CD4-positive, alpha-beta memory T cell (primary cell): ENCODE measurements at regions of chr14 and their contacts with region 1.

Region 1: GRCh38 chr14:99271951-99272631 is at the start of gene BCL11B:
- DNase-seq: peak; percentile 87 to 96 (median 91)
- H3K4me3 ChIP-seq: peak within 1 kb of the TSS; percentile 91 to 93
- H3K4me3 Mint-ChIP-seq: peak within 1 kb of the TSS; percentile 92 to 100 (median 98)
- H3K27ac ChIP-seq: peak within 1 kb of the TSS; percentile 80
- H3K27ac Mint-ChIP-seq: peak within 1 kb of the TSS; percentile 95 to 99 (median 96)
- H3K4me1 ChIP-seq: peaks cover 21% of the 10 kb centered on the region
- H3K4me1 Mint-ChIP-seq: peaks cover 12 to 53% (median 27%) of the 10 kb centered on the region in 4 donors
- H3K27me3 ChIP-seq: no peaks in the 10 kb centered on the region
- H3K27me3 Mint-ChIP-seq: no peaks in the 10 kb centered on the region
- total RNA-seq, gene BCL11B: 163 to 165 TPM

Region 2: DNA sequence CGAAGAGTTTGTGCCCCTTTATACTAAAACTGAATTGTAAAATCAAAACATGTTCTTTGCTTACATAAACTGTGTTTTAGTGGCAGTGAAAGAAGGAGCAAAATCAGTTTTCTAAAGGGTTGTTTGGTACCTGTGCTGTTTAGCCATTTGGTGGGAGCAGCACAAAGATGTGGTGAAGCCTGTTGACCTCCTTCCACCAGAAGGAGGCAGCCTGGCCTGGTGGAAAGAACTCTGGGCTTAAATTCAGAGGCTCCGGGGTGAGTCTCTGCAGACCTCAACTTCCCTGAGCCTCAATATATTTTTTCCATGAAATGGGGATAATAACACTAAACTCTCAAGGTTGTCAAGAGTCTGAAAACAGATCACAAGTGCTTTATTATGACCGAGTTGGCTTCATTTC is 1972.4 kb before region 1 on chr14:
- CTCF ChIA-PET with region 1: no interaction called
- POLR2A ChIA-PET with region 1: no interaction called
- intact Hi-C with region 1: loop called (anchors 1 kb)
- DNase-seq: peak in 4 of 5 donors; percentile 21 to 36 (median 24)
- H3K4me3 ChIP-seq: no peak overlapping the region
- H3K4me3 Mint-ChIP-seq: no peak overlapping the region
- H3K27ac ChIP-seq: no peak overlapping the region
- H3K27ac Mint-ChIP-seq: no peak overlapping the region
- H3K4me1 ChIP-seq: no peaks in the 10 kb centered on the region
- H3K4me1 Mint-ChIP-seq: peaks cover 0 to 27% (median 9%) of the 10 kb centered on the region in 4 donors
- H3K27me3 ChIP-seq: no peaks in the 10 kb centered on the region
- H3K27me3 Mint-ChIP-seq: peaks cover 2 to 5% of the 10 kb centered on the region in 2 donors

Region 3: DNA sequence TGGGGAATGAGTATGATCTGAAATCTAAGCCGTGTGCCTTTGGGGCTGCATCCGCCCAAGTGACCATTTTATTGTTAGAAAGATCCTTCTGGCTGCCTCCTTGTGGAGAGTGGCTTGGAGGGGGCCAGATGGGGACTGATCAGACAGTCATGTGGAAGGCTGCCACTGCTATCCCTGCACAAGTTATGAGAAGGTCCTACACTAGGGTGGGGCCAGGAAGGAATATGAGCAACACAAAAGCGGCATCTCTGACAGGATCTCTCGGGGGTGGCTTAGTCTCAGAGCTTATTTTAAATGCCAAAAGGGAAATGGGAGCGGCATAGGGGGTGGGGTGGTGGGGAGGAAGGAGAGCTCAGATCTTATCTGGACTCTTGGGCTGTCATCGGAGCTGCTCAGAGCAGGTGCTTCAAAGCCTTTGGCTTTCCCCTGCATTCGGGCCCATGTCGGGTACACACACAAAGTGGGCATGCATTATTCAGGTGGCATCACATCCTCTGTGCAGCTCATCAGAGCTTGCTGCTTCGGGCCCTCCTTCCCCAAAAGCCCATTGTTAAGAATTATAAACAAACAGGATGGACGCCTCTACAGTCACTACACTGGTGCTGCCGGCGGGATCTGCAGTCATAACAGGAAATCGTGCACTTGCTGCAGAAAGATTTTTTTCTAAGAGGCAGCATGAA is 1669.5 kb before region 1 on chr14:
- CTCF ChIA-PET with region 1: interaction called, 5 read pairs
- POLR2A ChIA-PET with region 1: interaction called, 25 read pairs
- intact Hi-C with region 1: loop called (anchors 1 kb)
- DNase-seq: peak; percentile 83 to 94 (median 88)
- H3K4me3 ChIP-seq: peak overlapping the region; percentile 5 to 21
- H3K4me3 Mint-ChIP-seq: no peak overlapping the region
- H3K27ac ChIP-seq: peak overlapping the region; percentile 72
- H3K27ac Mint-ChIP-seq: no peak overlapping the region
- H3K4me1 ChIP-seq: peaks cover 69% of the 10 kb centered on the region
- H3K4me1 Mint-ChIP-seq: peaks cover 4 to 41% (median 19%) of the 10 kb centered on the region in 4 donors
- H3K27me3 ChIP-seq: no peaks in the 10 kb centered on the region
- H3K27me3 Mint-ChIP-seq: no peaks in the 10 kb centered on the region

Region 4: GRCh38 chr14:97994020-97994531 is 1278.0 kb before region 1 on chr14:
- CTCF ChIA-PET with region 1: interaction called, 6 read pairs
- POLR2A ChIA-PET with region 1: interaction called, 4 read pairs
- intact Hi-C with region 1: loop called (anchors 5 kb)
- DNase-seq: peak; percentile 66 to 75 (median 71)
- H3K4me3 ChIP-seq: no peak overlapping the region
- H3K4me3 Mint-ChIP-seq: peak overlapping the region in 7 of 8 donors; percentile 28 to 72 (median 67)
- H3K27ac ChIP-seq: peak overlapping the region; percentile 50
- H3K27ac Mint-ChIP-seq: peak overlapping the region; percentile 82 to 96 (median 92)
- H3K4me1 ChIP-seq: peaks cover 59% of the 10 kb centered on the region
- H3K4me1 Mint-ChIP-seq: peaks cover 54 to 78% (median 66%) of the 10 kb centered on the region in 4 donors
- H3K27me3 ChIP-seq: no peaks in the 10 kb centered on the region
- H3K27me3 Mint-ChIP-seq: no peaks in the 10 kb centered on the region

Region 5: DNA sequence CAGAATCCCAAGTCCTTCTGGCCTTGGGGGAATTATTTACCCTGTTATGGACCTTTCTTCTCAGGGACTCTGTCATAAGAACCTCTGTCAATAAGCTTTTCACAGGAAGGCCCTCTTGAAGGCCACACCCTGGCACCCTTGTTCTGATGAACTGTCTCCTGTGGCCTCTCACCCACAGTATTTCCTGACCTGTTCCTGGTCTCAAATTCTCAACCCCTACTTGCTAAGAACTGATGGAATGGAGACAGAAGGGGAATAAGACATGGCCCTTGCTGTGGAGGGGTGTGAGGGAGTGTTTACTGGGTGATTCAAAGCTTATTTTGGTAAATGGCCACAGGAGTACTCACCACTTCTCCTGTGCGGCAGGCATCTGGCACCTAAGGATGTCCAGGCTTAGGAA is 1083.0 kb before region 1 on chr14:
- CTCF ChIA-PET with region 1: interaction called, 6 read pairs
- POLR2A ChIA-PET with region 1: interaction called, 320 read pairs
- intact Hi-C with region 1: loop called (anchors 2 kb)
- DNase-seq: peak in 1 of 5 donors; percentile 39
- H3K4me3 ChIP-seq: peak overlapping the region; percentile 38 to 42
- H3K4me3 Mint-ChIP-seq: peak overlapping the region; percentile 67 to 85 (median 80)
- H3K27ac ChIP-seq: peak overlapping the region; percentile 65
- H3K27ac Mint-ChIP-seq: peak overlapping the region; percentile 84 to 98 (median 94)
- H3K4me1 ChIP-seq: peaks cover 100% of the 10 kb centered on the region
- H3K4me1 Mint-ChIP-seq: peaks cover 84 to 100% (median 94%) of the 10 kb centered on the region in 4 donors
- H3K27me3 ChIP-seq: no peaks in the 10 kb centered on the region
- H3K27me3 Mint-ChIP-seq: no peaks in the 10 kb centered on the region

Region 6: GRCh38 chr14:98931911-98932310 is 340.2 kb before region 1 on chr14:
- CTCF ChIA-PET with region 1: interaction called, 3 read pairs
- POLR2A ChIA-PET with region 1: interaction called, 11 read pairs
- intact Hi-C with region 1: loop called (anchors 5 kb)
- DNase-seq: peak; percentile 82 to 85 (median 84)
- H3K4me3 ChIP-seq: peak overlapping the region in 1 of 2 donors; percentile 41
- H3K4me3 Mint-ChIP-seq: peak overlapping the region; percentile 68 to 91 (median 83)
- H3K27ac ChIP-seq: peak overlapping the region; percentile 16
- H3K27ac Mint-ChIP-seq: peak overlapping the region; percentile 79 to 97 (median 91)
- H3K4me1 ChIP-seq: peaks cover 66% of the 10 kb centered on the region
- H3K4me1 Mint-ChIP-seq: peaks cover 62 to 91% (median 78%) of the 10 kb centered on the region in 4 donors
- H3K27me3 ChIP-seq: no peaks in the 10 kb centered on the region
- H3K27me3 Mint-ChIP-seq: no peaks in the 10 kb centered on the region

Region 7: GRCh38 chr14:99004135-99004534 is 268.0 kb before region 1 on chr14:
- CTCF ChIA-PET with region 1: no interaction called
- POLR2A ChIA-PET with region 1: no interaction called
- intact Hi-C with region 1: no loop called
- DNase-seq: no peak
- H3K4me3 ChIP-seq: no peak overlapping the region
- H3K4me3 Mint-ChIP-seq: no peak overlapping the region
- H3K27ac ChIP-seq: no peak overlapping the region
- H3K27ac Mint-ChIP-seq: no peak overlapping the region
- H3K4me1 ChIP-seq: peaks cover under 1% of the 10 kb centered on the region
- H3K4me1 Mint-ChIP-seq: peaks cover 0 to 4% (median 1%) of the 10 kb centered on the region in 4 donors
- H3K27me3 ChIP-seq: no peaks in the 10 kb centered on the region
- H3K27me3 Mint-ChIP-seq: no peaks in the 10 kb centered on the region

Region 8: DNA sequence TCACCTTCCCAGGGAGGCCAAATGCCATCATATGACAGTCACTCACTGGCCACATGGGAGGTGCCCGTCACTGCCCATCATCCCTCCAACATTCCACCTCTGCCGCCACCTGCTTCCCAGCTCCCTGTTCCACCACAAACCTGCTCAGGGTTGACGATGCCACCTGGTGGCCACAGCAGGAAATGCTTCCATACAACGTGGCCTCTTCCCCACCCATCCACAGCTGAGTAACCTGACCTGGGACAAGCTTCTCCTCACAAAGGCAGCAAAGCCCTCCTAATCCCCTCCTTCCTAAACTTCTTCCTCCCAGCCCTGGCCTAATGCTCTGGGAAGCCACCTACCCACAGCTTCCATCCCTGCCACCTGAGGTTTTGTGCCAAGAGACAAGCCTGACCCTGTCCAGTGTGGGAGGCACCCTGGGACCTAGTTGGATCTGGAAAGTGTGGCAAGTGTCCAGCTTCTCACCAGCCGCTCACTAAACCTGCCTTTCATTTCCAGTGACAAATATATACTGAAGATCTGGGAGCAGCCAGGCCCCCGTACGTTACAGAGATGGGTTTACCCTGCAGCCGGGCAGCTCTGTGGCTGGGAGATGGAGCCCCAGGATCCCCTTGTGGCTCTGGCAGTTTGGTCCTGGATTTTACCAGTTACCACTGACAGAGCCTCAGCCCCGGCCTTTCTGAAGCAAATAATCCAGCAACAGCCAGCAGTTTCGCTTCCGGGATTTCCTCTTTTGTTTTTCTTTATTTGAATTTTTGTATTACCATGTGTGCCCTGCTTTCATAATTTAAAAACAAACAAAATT is 883.2 kb after region 1 on chr14:
- CTCF ChIA-PET with region 1: no interaction called
- POLR2A ChIA-PET with region 1: no interaction called
- intact Hi-C with region 1: no loop called
- DNase-seq: no peak
- H3K4me3 ChIP-seq: no peak overlapping the region
- H3K4me3 Mint-ChIP-seq: peak overlapping the region in 2 of 8 donors; percentile 15 to 38
- H3K27ac ChIP-seq: no peak overlapping the region
- H3K27ac Mint-ChIP-seq: peak overlapping the region in 1 of 7 donors; percentile 68
- H3K4me1 ChIP-seq: peaks cover 9% of the 10 kb centered on the region
- H3K4me1 Mint-ChIP-seq: peaks cover 0 to 10% (median 1%) of the 10 kb centered on the region in 4 donors
- H3K27me3 ChIP-seq: no peaks in the 10 kb centered on the region
- H3K27me3 Mint-ChIP-seq: peaks cover 11 to 12% of the 10 kb centered on the region in 2 donors